Sigmoid colon (tissue), 7 donors: ENCODE measurements at regions of chr1 and their contacts with region 1.

Region 1: DNA sequence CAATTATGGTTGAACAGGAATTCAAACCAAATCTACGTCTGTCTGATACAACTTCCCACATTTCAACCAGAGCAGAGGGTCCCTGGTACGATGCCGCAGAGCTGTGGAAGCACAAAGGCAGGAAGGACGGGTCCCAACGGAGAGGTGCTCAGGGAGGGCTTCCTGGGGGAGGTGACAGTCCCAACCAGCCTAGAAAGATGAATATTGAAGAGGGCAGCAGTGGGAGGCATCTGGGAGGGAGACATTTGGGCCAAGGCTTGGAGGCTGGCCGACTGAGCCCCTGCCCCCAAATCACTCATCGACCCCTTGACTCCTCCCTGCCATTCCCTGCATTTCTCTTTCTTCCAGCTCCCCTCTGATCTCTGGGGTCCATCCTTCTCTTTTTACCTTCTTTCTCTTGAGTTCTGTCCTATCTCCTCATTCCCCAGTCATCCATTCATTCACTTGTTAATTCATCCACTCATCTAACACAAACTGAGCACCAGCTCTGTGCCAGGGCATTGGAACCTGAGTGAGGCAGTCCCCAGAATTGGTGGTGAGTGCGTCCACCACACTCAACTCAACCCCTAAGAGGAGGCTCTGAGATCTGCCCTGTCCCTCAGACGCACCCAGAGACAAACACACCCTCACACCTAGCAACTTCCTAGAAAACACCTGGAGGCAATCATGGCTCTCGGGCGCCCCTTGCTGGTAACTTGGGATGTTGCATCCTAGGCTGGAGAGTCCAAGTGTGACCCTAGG is 13.2 kb upstream of the CELA3B start:
- DNase-seq: peak; percentile 89
- H3K4me3 ChIP-seq: no peak overlapping the region
- H3K27ac ChIP-seq: peak overlapping the region in 1 of 4 donors; percentile 22
- H3K4me1 ChIP-seq: peaks cover 0 to 12% (median 7%) of the 10 kb centered on the region in 4 donors
- H3K27me3 ChIP-seq: no peaks in the 10 kb centered on the region
- CTCF ChIP-seq: peak; percentile 81 to 96 (median 93)
- EP300 ChIP-seq: no peak
- POLR2A ChIP-seq: no peak

Region 2: GRCh38 chr1:21782868-21783678 is 180.6 kb before region 1 on chr1 and contains the start of gene USP48:
- intact Hi-C with region 1: loop called (anchors 2 kb)
- DNase-seq: peak; percentile 98
- H3K4me3 ChIP-seq: peak within 1 kb of the TSS; percentile 84 to 97 (median 94)
- H3K27ac ChIP-seq: peak within 1 kb of the TSS; percentile 96 to 100 (median 99)
- H3K4me1 ChIP-seq: peaks cover 0 to 31% (median 24%) of the 10 kb centered on the region in 4 donors
- H3K27me3 ChIP-seq: no peaks in the 10 kb centered on the region
- CTCF ChIP-seq: no peak
- EP300 ChIP-seq: no peak
- POLR2A ChIP-seq: peak; percentile 93 to 94
- total RNA-seq, gene USP48: 47.1 to 77.0 (median 50.5) TPM

Region 3: DNA sequence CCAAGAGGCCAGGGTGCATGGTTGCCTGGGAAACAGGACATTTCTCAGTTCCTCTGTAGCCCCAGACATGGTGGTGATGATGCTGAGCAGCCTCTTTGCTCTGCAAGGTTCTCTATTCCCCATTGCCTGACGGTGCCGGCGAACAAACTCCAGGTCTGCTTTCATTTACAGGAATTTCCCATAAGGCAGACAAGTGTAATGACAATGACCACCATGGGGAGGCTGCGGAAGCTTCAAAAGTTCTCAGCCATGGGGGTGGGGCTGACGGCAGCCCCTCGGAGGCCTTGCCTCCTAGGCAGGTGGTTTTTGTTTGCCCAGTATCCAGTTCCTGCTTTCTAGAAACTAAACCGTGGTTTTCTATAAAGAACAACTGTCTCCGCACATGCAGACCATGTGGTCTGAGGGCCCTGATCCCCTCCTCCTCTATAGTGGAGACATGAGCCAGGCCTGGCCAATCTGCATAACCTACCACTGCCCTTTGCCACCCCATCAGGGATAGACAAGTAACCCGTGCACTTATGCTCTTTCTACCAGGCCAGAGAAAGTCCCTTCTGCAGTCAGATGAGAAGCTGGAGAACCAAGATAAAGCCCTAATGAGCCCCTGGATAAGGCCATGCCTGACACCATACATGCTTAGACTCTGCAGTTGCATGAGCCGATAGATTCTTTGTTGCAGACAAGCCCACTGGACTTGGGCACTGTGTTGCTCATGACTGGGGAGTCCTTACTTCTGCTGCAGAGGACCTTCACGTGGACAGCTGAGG is 97.5 kb before region 1 on chr1:
- intact Hi-C with region 1: loop called (anchors 5 kb)
- DNase-seq: no peak
- H3K4me3 ChIP-seq: no peak overlapping the region
- H3K27ac ChIP-seq: peak overlapping the region; percentile 45 to 88 (median 70)
- H3K4me1 ChIP-seq: peaks cover 0 to 55% (median 21%) of the 10 kb centered on the region in 4 donors
- H3K27me3 ChIP-seq: no peaks in the 10 kb centered on the region
- CTCF ChIP-seq: no peak
- EP300 ChIP-seq: no peak
- POLR2A ChIP-seq: no peak

Region 4: GRCh38 chr1:22018583-22019559 is 55.2 kb after region 1 on chr1:
- intact Hi-C with region 1: no loop called
- DNase-seq: peak; percentile 71
- H3K4me3 ChIP-seq: no peak overlapping the region
- H3K27ac ChIP-seq: peak overlapping the region in 2 of 4 donors; percentile 21 to 27
- H3K4me1 ChIP-seq: peaks cover 0 to 1% (median under 1%) of the 10 kb centered on the region in 4 donors
- H3K27me3 ChIP-seq: no peaks in the 10 kb centered on the region
- CTCF ChIP-seq: no peak
- EP300 ChIP-seq: no peak
- POLR2A ChIP-seq: no peak